Gastrocnemius medialis (tissue), 4 donors: ENCODE measurements at regions of chr12 and their contacts with region 1.

Region 1: GRCh38 chr12:45762185-45763110 is 32.9 kb downstream of the ARID2 start:
- DNase-seq: no peak
- ATAC-seq: peak; percentile 47 to 69
- H3K4me3 ChIP-seq: no peak overlapping the region
- H3K27ac ChIP-seq: no peak overlapping the region
- H3K4me1 ChIP-seq: peaks cover 8 to 20% of the 10 kb centered on the region in 2 donors
- H3K27me3 ChIP-seq: no peaks in the 10 kb centered on the region
- CTCF ChIP-seq: peak in 4 of 5 experiments; percentile 22 to 63 (median 36)
- POLR2A ChIP-seq: no peak

Region 2: GRCh38 chr12:45688183-45688582 is 74.3 kb before region 1 on chr12:
- in situ Hi-C with region 1: no loop called
- intact Hi-C with region 1: no loop called
- DNase-seq: no peak
- ATAC-seq: no peak
- H3K4me3 ChIP-seq: no peak overlapping the region
- H3K27ac ChIP-seq: no peak overlapping the region
- H3K4me1 ChIP-seq: no peaks in the 10 kb centered on the region
- H3K27me3 ChIP-seq: no peaks in the 10 kb centered on the region
- CTCF ChIP-seq: no peak
- POLR2A ChIP-seq: no peak

Region 3: DNA sequence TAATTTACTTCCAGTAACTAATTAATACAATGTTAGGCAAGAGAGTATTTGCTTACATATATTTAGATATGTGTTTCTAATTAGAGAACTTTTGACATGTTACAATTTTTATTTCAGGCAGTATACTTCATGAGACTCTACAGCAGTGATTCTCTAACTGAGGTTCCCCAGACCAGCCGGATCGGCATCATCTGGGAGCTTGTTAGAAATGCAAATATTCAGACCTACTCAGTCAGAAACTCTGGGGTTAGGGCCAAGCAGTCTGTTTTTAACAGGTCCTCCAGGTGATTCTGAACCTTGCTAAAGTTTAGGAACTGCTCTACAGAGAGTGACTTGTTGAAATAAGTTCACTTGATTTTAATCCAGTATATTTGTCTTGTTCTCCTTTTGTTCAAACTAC is 13.5 kb after region 1 on chr12:
- in situ Hi-C with region 1: no loop called
- intact Hi-C with region 1: no loop called
- DNase-seq: no peak
- ATAC-seq: no peak
- H3K4me3 ChIP-seq: no peak overlapping the region
- H3K27ac ChIP-seq: peak overlapping the region; percentile 77 to 83 (median 78)
- H3K4me1 ChIP-seq: peaks cover 55 to 57% of the 10 kb centered on the region in 2 donors
- H3K27me3 ChIP-seq: no peaks in the 10 kb centered on the region
- CTCF ChIP-seq: no peak
- POLR2A ChIP-seq: no peak

Region 4: GRCh38 chr12:45839917-45840316 is 77.5 kb after region 1 on chr12:
- in situ Hi-C with region 1: no loop called
- intact Hi-C with region 1: no loop called
- DNase-seq: no peak
- ATAC-seq: no peak
- H3K4me3 ChIP-seq: no peak overlapping the region
- H3K27ac ChIP-seq: no peak overlapping the region
- H3K4me1 ChIP-seq: no peaks in the 10 kb centered on the region
- H3K27me3 ChIP-seq: no peaks in the 10 kb centered on the region
- CTCF ChIP-seq: no peak
- POLR2A ChIP-seq: no peak

Region 5: GRCh38 chr12:45966486-45966885 is 204.0 kb after region 1 on chr12:
- in situ Hi-C with region 1: loop called in 1 of 4 experiments (anchors 25 kb)
- intact Hi-C with region 1: no loop called
- DNase-seq: no peak
- ATAC-seq: peak in 1 of 2 donors; percentile 42
- H3K4me3 ChIP-seq: no peak overlapping the region
- H3K27ac ChIP-seq: no peak overlapping the region
- H3K4me1 ChIP-seq: peaks cover 53 to 62% of the 10 kb centered on the region in 2 donors
- H3K27me3 ChIP-seq: no peaks in the 10 kb centered on the region
- CTCF ChIP-seq: no peak
- POLR2A ChIP-seq: no peak